Activated B cell treated with CpG ODN at 0.5 μM for 24 hours (primary cell): ENCODE measurements at regions of chr1 and their contacts with region 1.

Region 1: DNA sequence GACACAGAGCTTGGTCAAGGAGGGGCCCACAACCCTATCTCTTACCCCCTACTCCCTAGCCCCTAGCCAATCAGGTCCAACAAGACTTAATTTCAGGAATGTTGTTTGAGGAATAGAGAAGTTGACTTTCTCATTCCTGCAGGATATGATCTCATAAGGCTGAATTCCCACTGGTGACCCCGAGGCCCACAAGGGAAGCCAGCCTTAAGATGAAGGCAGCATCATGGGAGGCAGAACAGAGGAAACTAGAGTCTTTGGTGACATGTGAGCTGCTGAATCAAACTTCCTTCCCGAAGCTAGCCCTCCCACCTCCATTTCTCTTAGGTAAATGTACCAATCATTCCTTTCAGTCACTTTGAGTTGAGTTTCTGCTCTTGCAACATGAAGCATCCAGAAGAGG is 9.1 kb upstream of the PDIK1L start:
- DNase-seq: no peak
- ATAC-seq: no peak
- H3K4me3 Mint-ChIP-seq: no peak overlapping the region
- H3K27ac Mint-ChIP-seq: no peak overlapping the region
- H3K4me1 Mint-ChIP-seq: peaks cover 4% of the 10 kb centered on the region
- H3K27me3 Mint-ChIP-seq: peaks cover 14% of the 10 kb centered on the region
- CTCF ChIP-seq: no peak

Region 2: DNA sequence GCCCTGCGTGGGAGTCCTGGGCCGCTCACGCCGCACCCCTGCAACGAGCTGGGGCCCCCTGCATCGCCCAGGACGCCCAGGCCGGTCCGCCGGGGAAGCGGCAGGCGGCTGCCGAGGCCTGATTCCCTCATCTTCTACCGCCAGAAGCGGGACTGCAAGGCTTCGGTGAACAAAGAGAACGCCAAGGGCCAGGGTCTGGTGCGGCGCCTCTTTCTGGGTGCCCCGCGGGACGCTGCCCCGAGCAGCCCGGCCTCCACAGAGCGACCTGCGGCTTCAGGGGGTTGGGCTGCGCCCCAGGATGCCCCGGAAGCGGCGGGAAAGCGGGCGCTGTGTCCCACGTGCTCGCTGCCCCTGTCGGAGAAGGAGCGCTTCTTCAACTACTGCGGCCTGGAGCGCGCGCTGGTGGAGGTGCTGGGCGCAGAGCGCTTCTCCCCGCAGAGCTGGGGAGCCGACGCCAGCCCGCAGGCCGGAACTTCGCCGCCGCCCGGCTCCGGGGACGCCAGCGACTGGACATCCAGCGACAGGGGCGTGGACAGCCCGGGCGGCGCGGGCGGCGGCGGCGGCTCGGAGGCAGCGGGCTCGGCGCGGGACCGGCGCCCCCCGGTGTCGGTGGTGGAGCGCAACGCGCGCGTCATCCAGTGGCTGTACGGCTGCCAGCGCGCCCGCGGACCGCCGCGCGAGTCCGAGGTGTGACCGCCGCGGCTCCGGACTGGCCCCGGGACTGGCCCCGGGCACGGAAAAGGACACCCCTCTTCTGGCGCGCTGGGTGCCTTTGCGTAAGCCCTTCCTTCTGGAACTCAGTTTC is 59.1 kb after region 1 on chr1:
- CTCF ChIA-PET with region 1: interaction called, 3 read pairs
- POLR2A ChIA-PET with region 1: no interaction called
- intact Hi-C with region 1: loop called (anchors 1 kb)
- DNase-seq: peak; percentile 54
- ATAC-seq: peak; percentile 64
- H3K4me3 Mint-ChIP-seq: peak overlapping the region; percentile 59
- H3K27ac Mint-ChIP-seq: no peak overlapping the region
- H3K4me1 Mint-ChIP-seq: peaks cover 13% of the 10 kb centered on the region
- H3K27me3 Mint-ChIP-seq: peaks cover 26% of the 10 kb centered on the region
- CTCF ChIP-seq: no peak

Region 3: GRCh38 chr1:26363549-26364448 is 261.3 kb after region 1 on chr1:
- CTCF ChIA-PET with region 1: interaction called, 5 read pairs
- POLR2A ChIA-PET with region 1: no interaction called
- intact Hi-C with region 1: loop called (anchors 1 kb)
- DNase-seq: peak; percentile 81
- ATAC-seq: peak; percentile 72
- H3K4me3 Mint-ChIP-seq: no peak overlapping the region
- H3K27ac Mint-ChIP-seq: no peak overlapping the region
- H3K4me1 Mint-ChIP-seq: peaks cover 27% of the 10 kb centered on the region
- H3K27me3 Mint-ChIP-seq: peaks cover 24% of the 10 kb centered on the region
- CTCF ChIP-seq: peak; percentile 90

Region 4: DNA sequence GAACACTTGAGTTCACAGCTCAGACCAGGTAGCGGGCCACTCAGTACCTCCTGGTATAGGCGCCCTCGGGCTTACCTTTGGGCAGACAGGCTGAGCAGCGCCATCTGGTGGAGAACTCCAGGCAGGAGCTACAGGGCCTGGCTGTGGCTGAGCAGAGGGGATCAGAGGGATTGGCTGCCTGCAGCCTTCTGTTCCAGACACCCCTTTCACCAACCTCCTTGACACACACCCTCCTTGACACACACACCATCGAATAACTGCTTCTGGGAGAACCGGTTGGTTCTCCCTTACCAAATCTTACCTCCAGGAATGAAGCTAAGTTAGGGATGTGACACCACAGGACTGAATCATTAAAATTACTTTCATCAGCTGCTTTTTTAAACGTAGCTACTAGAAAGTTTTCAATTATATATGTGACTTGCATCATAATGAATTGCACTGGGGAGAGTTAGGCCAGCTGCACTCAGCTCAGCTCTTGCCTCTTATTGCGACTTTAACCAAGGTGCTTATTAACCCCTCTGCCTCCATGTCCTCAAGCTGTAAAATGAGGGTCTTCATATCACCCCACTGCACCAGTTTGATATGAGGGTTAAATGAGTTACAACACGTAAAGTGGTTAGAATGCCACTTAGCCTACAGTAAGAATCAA is 314.7 kb after region 1 on chr1:
- CTCF ChIA-PET with region 1: interaction called, 28 read pairs
- POLR2A ChIA-PET with region 1: no interaction called
- intact Hi-C with region 1: loop called (anchors 1 kb)
- DNase-seq: peak; percentile 67
- ATAC-seq: peak; percentile 99
- H3K4me3 Mint-ChIP-seq: no peak overlapping the region
- H3K27ac Mint-ChIP-seq: no peak overlapping the region
- H3K4me1 Mint-ChIP-seq: no peaks in the 10 kb centered on the region
- H3K27me3 Mint-ChIP-seq: peaks cover 29% of the 10 kb centered on the region
- CTCF ChIP-seq: peak; percentile 35